ENCODE measurements at regions of chr4 and their contacts with region 1.

Region 1: DNA sequence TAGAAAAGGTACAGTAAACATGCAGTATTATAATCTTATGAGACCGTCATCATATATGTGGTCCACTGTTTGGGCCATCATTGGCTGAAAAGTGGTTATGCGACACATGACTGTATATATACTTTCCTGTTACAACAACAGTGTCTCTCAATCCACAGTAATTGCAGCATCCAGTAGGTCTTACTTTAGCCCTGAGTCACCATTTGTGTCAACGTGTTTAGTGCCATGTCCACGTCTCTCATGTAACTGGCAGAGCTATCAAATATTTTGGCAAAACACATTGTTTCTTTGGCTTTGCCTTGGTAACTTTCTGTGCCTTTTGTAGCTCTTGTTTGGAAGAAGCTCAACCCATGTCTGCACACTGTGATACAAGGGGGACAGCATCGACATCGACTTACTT is 73.8 kb downstream of the CD38 start:
- DNase-seq: peak; percentile 41
- H3K4me3 Mint-ChIP-seq: no peak overlapping the region
- H3K27ac Mint-ChIP-seq: no peak overlapping the region
- H3K4me1 Mint-ChIP-seq: peaks cover 9% of the 10 kb centered on the region
- H3K27me3 Mint-ChIP-seq: no peaks in the 10 kb centered on the region

Region 2: GRCh38 chr4:15875663-15876460 is 23.9 kb after region 1 on chr4:
- intact Hi-C with region 1: loop called (anchors 1 kb)
- DNase-seq: no peak
- H3K4me3 Mint-ChIP-seq: no peak overlapping the region
- H3K27ac Mint-ChIP-seq: no peak overlapping the region
- H3K4me1 Mint-ChIP-seq: no peaks in the 10 kb centered on the region
- H3K27me3 Mint-ChIP-seq: peaks cover 12% of the 10 kb centered on the region

Measured in activated CD4-positive, alpha-beta T cell treated with anti-CD3 and anti-CD28 coated beads, Interleukin-2, amount 10 ng/mL, durations not matched to agents 24 days and 14 days (primary cell).